Activated T-helper 2 cell treated with anti-CD3 and anti-CD28 coated beads, Interferon-gamma antibody, Interleukin-2, Interleukin-4, amounts not matched to agents 10 μg/mL and 5 μg/mL and 100 μg/mL, durations not matched to agents 14 hours and 24 hours and 36 hours (primary cell): ENCODE measurements at regions of chr13 and their contacts with region 1.

Region 1: DNA sequence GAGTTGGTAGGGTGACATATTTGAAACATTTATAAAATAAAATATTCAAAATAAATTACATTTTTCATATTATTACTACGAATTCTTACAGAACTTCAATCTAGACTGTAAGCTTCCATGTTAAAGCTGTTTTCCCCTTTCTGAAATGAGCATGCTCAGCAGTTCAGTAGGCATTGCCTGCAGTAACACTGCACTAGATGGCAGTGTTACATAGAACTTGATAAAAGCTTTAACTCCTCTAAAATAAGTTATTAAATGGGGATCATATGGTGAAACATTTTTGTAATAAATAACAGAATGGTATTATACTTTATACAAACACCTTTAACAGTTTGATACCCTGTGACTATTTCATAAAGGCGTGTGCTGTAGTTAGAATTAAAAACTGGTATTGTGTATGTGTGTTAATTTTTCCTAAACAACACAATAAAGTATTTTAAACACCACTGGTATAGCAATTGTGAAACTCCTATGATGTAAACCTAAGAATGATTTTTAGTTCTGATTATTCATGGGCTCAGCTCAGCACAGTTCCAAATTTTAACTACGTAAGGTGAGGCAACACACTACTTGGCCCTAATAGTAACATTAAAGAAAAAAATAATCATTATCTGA is 11.6 kb upstream of the GPR18 start:
- DNase-seq: no peak
- H3K4me3 Mint-ChIP-seq: no peak overlapping the region
- H3K27ac Mint-ChIP-seq: no peak overlapping the region
- H3K4me1 Mint-ChIP-seq: peaks cover 54% of the 10 kb centered on the region
- H3K27me3 Mint-ChIP-seq: no peaks in the 10 kb centered on the region

Region 2: GRCh38 chr13:99176309-99177276 is 93.1 kb before region 1 on chr13:
- intact Hi-C with region 1: loop called (anchors 1 kb)
- DNase-seq: peak; percentile 60
- H3K4me3 Mint-ChIP-seq: no peak overlapping the region
- H3K27ac Mint-ChIP-seq: peak overlapping the region; percentile 24
- H3K4me1 Mint-ChIP-seq: peaks cover 17% of the 10 kb centered on the region
- H3K27me3 Mint-ChIP-seq: peaks cover 4% of the 10 kb centered on the region

Region 3: DNA sequence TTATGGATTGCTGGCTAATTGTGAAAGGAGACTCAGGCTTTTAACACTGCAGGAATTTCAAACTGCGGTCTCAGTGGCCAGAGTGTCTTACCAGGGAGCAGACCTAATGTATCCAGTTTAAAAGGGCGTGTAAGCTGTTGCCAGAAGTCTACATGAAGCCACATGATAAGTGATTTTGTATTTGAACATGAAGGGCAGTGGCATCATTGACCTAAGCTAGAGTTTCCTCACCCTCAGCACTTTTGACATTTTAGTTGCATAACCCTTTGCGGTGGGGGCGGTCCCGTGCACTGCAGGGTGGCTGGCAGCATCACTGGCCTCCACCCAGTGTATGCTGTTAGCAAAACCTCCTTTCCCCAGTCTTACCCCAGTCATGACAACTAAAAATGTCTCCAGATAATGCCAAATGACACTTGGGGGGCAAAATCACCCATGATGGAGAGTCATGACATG is 12.1 kb after region 1 on chr13:
- intact Hi-C with region 1: no loop called
- DNase-seq: peak; percentile 37
- H3K4me3 Mint-ChIP-seq: no peak overlapping the region
- H3K27ac Mint-ChIP-seq: peak overlapping the region; percentile 47
- H3K4me1 Mint-ChIP-seq: peaks cover 80% of the 10 kb centered on the region
- H3K27me3 Mint-ChIP-seq: no peaks in the 10 kb centered on the region

Region 4: GRCh38 chr13:99331881-99332293 is 62.2 kb after region 1 on chr13:
- intact Hi-C with region 1: no loop called
- DNase-seq: no peak
- H3K4me3 Mint-ChIP-seq: no peak overlapping the region
- H3K27ac Mint-ChIP-seq: peak overlapping the region; percentile 69
- H3K4me1 Mint-ChIP-seq: peaks cover 48% of the 10 kb centered on the region
- H3K27me3 Mint-ChIP-seq: no peaks in the 10 kb centered on the region

Region 5: GRCh38 chr13:99386911-99387788 is 117.4 kb after region 1 on chr13:
- intact Hi-C with region 1: loop called (anchors 1 kb)
- DNase-seq: peak; percentile 73
- H3K4me3 Mint-ChIP-seq: no peak overlapping the region
- H3K27ac Mint-ChIP-seq: peak overlapping the region; percentile 70
- H3K4me1 Mint-ChIP-seq: peaks cover 54% of the 10 kb centered on the region
- H3K27me3 Mint-ChIP-seq: no peaks in the 10 kb centered on the region